Adrenal gland (tissue), 19 donors: ENCODE measurements at regions of chr10 and their contacts with region 1.

Region 1: DNA sequence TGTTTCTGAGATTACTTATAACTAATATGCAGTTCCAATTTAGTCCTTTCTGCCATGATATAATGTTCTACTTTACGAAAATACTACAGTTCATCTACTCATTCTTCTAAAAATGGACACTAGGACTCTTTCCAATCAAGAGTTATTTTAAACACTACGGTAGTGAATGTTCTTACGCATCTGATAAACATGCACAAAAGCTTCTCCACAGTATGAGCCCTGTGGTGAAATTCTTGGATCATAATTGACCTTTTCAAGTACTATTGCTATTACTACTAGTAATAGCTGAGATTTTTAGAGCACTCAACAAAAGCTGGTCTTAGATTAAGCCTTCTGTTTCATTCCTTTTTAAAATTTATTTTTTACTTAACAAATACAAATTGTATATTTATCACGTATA is 106.4 kb downstream of the CH25H start:
- DNase-seq: no peak
- H3K4me3 ChIP-seq: no peak overlapping the region
- H3K27ac ChIP-seq: no peak overlapping the region
- H3K4me1 ChIP-seq: no peaks in the 10 kb centered on the region
- H3K27me3 ChIP-seq: no peaks in the 10 kb centered on the region
- CTCF ChIP-seq: no peak
- POLR2A ChIP-seq: no peak

Region 2: DNA sequence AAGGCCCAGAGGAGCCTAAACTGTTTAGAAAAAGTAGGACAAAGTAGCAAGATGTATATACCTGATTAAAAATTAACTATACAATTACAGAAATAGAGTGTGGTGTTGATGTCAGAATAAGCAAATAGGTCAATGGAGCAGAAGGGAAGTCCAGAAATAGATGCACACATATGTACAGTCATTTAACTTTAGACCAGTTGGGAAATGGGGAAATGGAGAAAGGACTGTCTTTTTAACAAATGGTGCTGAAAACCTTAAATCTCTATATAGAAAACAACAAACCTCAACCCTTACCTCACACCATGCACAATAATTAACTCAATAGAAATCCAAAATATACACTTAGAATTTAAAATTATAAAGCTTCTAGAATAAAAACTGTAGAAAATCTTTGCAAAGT is 34.3 kb after region 1 on chr10:
- intact Hi-C with region 1: no loop called
- DNase-seq: no peak
- H3K4me3 ChIP-seq: no peak overlapping the region
- H3K27ac ChIP-seq: no peak overlapping the region
- H3K4me1 ChIP-seq: no peaks in the 10 kb centered on the region
- H3K27me3 ChIP-seq: no peaks in the 10 kb centered on the region
- CTCF ChIP-seq: no peak
- POLR2A ChIP-seq: no peak

Region 3: GRCh38 chr10:89207181-89207800 is 106.6 kb after region 1 on chr10 and contains the start of gene CH25H:
- intact Hi-C with region 1: loop called in 1 of 2 experiments (anchors 10 kb)
- DNase-seq: peak; percentile 68 to 88 (median 74)
- H3K4me3 ChIP-seq: peak within 1 kb of the TSS in 3 of 4 donors; percentile 22 to 53 (median 34)
- H3K27ac ChIP-seq: peak within 1 kb of the TSS in 4 of 5 donors; percentile 30 to 65 (median 40)
- H3K4me1 ChIP-seq: peaks cover 10 to 18% of the 10 kb centered on the region in 2 donors
- H3K27me3 ChIP-seq: peaks cover 25% of the 10 kb centered on the region
- CTCF ChIP-seq: no peak
- POLR2A ChIP-seq: no peak
- total RNA-seq, gene CH25H: 1.8 to 16.3 (median 8.8) TPM in 8 of 9 donors, not detected in the other